Endothelial cell of umbilical vein (primary cell): ENCODE measurements at regions of chr6 and their contacts with region 1.

Region 1: DNA sequence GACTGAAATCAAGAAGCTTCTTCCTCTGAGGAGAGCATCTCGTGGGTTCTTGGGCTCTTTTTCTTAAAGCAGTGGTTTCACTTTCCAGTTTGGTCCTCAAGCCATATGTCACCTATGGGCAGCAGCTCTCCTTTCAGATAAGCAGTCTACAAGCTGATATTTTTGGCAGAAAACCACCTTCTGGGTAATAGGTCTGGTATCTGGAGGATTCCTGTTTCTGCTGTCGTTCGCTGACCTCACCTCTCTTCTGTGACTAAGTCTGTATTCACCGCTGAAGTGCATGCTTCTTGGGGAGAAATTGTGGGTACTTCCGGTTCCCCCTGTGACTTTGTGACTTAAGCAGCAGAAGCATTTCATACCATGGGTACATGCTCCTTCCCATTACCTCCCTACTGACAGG is 193.6 kb downstream of the EDN1 start:
- DNase-seq: peak; percentile 90
- H3K4me3 ChIP-seq: peak overlapping the region in 1 of 3 experiments; percentile 9
- H3K27ac ChIP-seq: peak overlapping the region; percentile 74
- H3K4me1 ChIP-seq: peaks cover 54% of the 10 kb centered on the region
- H3K27me3 ChIP-seq: no peaks in the 10 kb centered on the region
- CTCF ChIP-seq: no peak
- POLR2A ChIP-seq: peak; percentile 56

Region 2: GRCh38 chr6:11585426-11586016 is 898.2 kb before region 1 on chr6:
- CTCF ChIA-PET with region 1: no interaction called
- POLR2A ChIA-PET with region 1: no interaction called
- dilution Hi-C with region 1: no loop called
- intact Hi-C with region 1: loop called (anchors 5 kb)
- DNase-seq: peak; percentile 83
- H3K4me3 ChIP-seq: no peak overlapping the region
- H3K27ac ChIP-seq: peak overlapping the region; percentile 79
- H3K4me1 ChIP-seq: peaks cover 29% of the 10 kb centered on the region
- H3K27me3 ChIP-seq: no peaks in the 10 kb centered on the region
- CTCF ChIP-seq: peak; percentile 41 to 42
- POLR2A ChIP-seq: no peak

Region 3: GRCh38 chr6:11770546-11771466 is 712.9 kb before region 1 on chr6:
- CTCF ChIA-PET with region 1: no interaction called
- POLR2A ChIA-PET with region 1: no interaction called
- dilution Hi-C with region 1: no loop called
- intact Hi-C with region 1: loop called (anchors 10 kb)
- DNase-seq: peak; percentile 93
- H3K4me3 ChIP-seq: no peak overlapping the region
- H3K27ac ChIP-seq: peak overlapping the region; percentile 94
- H3K4me1 ChIP-seq: peaks cover 58% of the 10 kb centered on the region
- H3K27me3 ChIP-seq: no peaks in the 10 kb centered on the region
- CTCF ChIP-seq: no peak
- POLR2A ChIP-seq: peak; percentile 84

Region 4: GRCh38 chr6:12313992-12314805 is 169.5 kb before region 1 on chr6:
- CTCF ChIA-PET with region 1: interaction called, 17 read pairs
- POLR2A ChIA-PET with region 1: no interaction called
- dilution Hi-C with region 1: no loop called
- intact Hi-C with region 1: loop called (anchors 5 kb)
- DNase-seq: peak; percentile 89
- H3K4me3 ChIP-seq: no peak overlapping the region
- H3K27ac ChIP-seq: peak overlapping the region; percentile 77
- H3K4me1 ChIP-seq: peaks cover 23% of the 10 kb centered on the region
- H3K27me3 ChIP-seq: no peaks in the 10 kb centered on the region
- CTCF ChIP-seq: no peak
- POLR2A ChIP-seq: no peak

Region 5: DNA sequence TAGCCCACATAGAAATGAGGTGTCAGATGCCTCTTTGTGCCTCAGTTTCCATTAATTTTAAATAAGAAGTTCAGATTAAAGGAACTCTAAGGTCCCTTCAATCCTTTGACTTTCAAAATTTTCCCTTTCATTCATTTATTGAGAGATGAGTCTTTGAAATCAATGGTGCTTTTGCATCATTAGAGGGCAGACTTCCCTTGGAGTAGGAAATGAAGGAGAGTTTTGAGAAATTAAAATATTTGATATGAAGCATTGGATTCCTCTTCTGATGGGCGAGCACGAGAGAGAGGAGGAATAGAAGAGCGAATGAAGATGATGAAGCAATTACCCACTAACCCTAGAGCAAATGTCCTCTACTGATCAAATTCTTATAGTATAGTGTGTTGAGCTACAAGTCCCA is 87.8 kb before region 1 on chr6:
- CTCF ChIA-PET with region 1: interaction called, 3 read pairs
- POLR2A ChIA-PET with region 1: no interaction called
- dilution Hi-C with region 1: no loop called
- intact Hi-C with region 1: loop called (anchors 2 kb)
- DNase-seq: peak; percentile 47
- H3K4me3 ChIP-seq: no peak overlapping the region
- H3K27ac ChIP-seq: no peak overlapping the region
- H3K4me1 ChIP-seq: peaks cover 26% of the 10 kb centered on the region
- H3K27me3 ChIP-seq: no peaks in the 10 kb centered on the region
- CTCF ChIP-seq: no peak
- POLR2A ChIP-seq: no peak

Region 6: GRCh38 chr6:12572896-12573827 is 89.5 kb after region 1 on chr6:
- CTCF ChIA-PET with region 1: interaction called, 11 read pairs
- POLR2A ChIA-PET with region 1: no interaction called
- dilution Hi-C with region 1: loop called (anchors 25 kb)
- intact Hi-C with region 1: no loop called
- DNase-seq: peak; percentile 92
- H3K4me3 ChIP-seq: peak overlapping the region in 1 of 3 experiments; percentile 13
- H3K27ac ChIP-seq: peak overlapping the region; percentile 92
- H3K4me1 ChIP-seq: peaks cover 75% of the 10 kb centered on the region
- H3K27me3 ChIP-seq: no peaks in the 10 kb centered on the region
- CTCF ChIP-seq: no peak
- POLR2A ChIP-seq: no peak

Region 7: DNA sequence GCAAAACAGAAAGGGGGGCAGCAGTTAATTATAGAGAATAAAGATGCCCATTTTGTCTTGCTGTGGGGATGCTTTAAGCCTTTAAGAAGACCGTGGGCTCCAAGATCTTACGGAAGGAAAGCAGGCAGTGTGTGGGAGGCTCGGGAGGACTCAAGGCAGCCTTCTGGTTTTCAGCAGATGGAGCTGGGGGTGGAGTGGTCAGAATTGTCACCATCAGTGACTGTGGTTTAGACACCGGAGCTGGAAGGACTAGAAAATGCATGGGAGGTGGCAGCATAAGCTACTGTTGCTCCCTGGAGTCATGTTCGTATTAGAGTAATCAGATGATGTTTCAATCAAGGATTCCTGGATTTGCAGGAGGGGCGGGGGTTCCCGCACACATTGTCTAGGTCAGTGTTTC is 236.6 kb after region 1 on chr6:
- CTCF ChIA-PET with region 1: no interaction called
- POLR2A ChIA-PET with region 1: no interaction called
- dilution Hi-C with region 1: no loop called
- intact Hi-C with region 1: no loop called
- DNase-seq: no peak
- H3K4me3 ChIP-seq: no peak overlapping the region
- H3K27ac ChIP-seq: no peak overlapping the region
- H3K4me1 ChIP-seq: no peaks in the 10 kb centered on the region
- H3K27me3 ChIP-seq: peaks cover 2% of the 10 kb centered on the region in 2 experiments
- CTCF ChIP-seq: no peak
- POLR2A ChIP-seq: no peak